ENCODE measurements at regions of chr1 and their contacts with region 1.

Region 1: DNA sequence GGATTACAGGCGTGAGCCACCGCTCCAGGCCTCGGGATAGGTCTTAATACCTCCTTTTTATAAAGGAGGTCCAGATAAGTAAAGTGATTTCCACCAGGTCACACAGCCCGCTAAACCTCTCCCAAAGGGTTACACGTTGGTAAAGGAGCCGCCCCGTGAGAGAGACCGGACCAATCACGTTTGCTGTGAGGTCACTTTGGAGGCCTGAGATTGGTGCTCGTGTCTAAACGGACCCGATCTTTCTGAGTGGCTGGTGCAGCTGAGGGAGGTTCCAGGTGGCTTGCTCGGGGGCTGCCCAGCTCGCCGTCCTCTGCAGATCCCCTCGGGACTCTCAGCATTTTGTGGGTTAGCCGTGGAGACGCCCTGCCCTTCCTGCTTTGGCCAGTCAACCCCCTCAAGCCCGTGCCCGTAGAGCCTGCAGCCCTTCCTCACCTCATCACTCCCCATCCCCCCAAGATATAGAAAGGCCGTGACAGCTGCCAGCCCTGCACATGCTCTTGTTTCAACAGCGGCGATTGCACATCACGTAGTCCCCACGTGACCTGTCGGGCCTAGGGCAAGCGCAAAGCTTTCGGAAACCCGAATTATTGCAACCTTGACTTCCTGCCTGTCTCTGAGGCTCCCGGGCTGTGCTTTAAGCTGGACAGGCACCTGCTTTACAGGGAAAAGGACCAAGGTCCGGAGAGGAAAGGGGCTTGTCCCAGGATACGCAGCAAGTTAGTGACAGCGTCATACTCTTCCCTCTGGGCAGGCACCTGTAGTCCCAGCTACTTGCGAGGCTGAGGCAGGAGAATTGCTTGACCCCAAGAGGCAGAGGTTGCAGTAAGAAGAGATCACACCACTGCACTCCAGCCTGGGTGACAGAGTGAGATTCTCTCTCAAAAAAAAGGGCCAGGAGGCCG is 5.0 kb upstream of the COA7 start:
- DNase-seq: peak; percentile 63 to 92 (median 72)
- ATAC-seq: peak; percentile 91
- H3K4me3 ChIP-seq: peak overlapping the region; percentile 62
- H3K4me3 Mint-ChIP-seq: peak overlapping the region; percentile 84
- H3K27ac ChIP-seq: peak overlapping the region; percentile 56 to 96
- H3K27ac Mint-ChIP-seq: peak overlapping the region; percentile 95
- H3K4me1 ChIP-seq: peaks cover 22% of the 10 kb centered on the region
- H3K4me1 Mint-ChIP-seq: peaks cover 20% of the 10 kb centered on the region
- H3K27me3 ChIP-seq: no peaks in the 10 kb centered on the region
- H3K27me3 Mint-ChIP-seq: no peaks in the 10 kb centered on the region
- CTCF ChIP-seq: no peak

Region 2: DNA sequence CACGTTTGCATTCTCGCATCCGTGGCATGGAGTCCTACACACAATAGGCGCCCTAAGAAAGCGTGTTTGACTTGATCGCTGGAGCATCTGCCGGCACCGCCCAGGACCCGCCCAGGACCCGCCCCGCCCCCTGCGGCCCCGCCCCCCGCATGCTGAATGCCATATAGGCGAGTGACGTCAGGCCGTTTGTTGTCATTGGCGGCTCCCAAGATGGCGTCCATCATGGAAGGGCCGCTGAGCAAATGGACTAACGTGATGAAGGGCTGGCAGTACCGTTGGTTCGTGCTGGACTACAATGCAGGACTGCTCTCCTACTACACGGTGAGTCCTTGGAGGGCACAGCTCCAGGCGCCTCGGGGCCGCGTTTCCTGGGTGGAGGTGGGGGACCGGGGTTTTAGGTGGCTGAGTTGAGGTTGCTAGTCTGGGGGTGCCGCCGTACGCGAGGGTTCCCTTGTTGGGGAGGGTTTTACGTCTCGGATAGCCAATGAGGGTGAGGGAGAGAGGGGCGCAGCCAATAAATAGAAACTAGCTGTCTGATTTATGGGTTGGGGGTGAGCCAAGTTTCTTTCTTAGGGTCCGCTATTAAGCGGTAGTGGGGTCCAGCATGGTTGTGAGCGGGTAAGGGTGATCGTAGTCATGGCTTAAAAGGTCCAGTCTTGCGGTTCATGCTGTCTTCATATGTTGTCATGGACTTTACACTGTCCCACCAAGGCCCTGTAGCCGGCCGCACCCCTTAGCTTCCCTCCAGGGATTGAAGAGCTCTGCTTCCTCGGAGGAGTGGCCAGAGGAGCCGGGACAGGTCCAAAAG is 1086.0 kb before region 1 on chr1 and contains the start of gene OSBPL9:
- CTCF ChIA-PET with region 1: no interaction called
- POLR2A ChIA-PET with region 1: no interaction called
- intact Hi-C with region 1: loop called in 1 of 2 experiments (anchors 5 kb)
- DNase-seq: peak; percentile 80 to 98 (median 85)
- ATAC-seq: peak; percentile 90
- H3K4me3 ChIP-seq: peak within 1 kb of the TSS; percentile 97
- H3K4me3 Mint-ChIP-seq: peak within 1 kb of the TSS; percentile 99
- H3K27ac ChIP-seq: peak within 1 kb of the TSS; percentile 61 to 73
- H3K27ac Mint-ChIP-seq: peak within 1 kb of the TSS; percentile 95
- H3K4me1 ChIP-seq: peaks cover 17% of the 10 kb centered on the region
- H3K4me1 Mint-ChIP-seq: peaks cover 47% of the 10 kb centered on the region
- H3K27me3 ChIP-seq: no peaks in the 10 kb centered on the region
- H3K27me3 Mint-ChIP-seq: no peaks in the 10 kb centered on the region
- CTCF ChIP-seq: no peak
- total RNA-seq, gene OSBPL9: 35.6 to 36.5 TPM

Region 3: GRCh38 chr1:52726265-52727113 is 23.4 kb after region 1 on chr1 and contains the start of gene ZYG11B:
- CTCF ChIA-PET with region 1: interaction called, 4 read pairs
- POLR2A ChIA-PET with region 1: interaction called, 36 read pairs
- intact Hi-C with region 1: loop called (anchors 1 kb)
- DNase-seq: peak; percentile 85 to 96 (median 92)
- ATAC-seq: peak; percentile 91
- H3K4me3 ChIP-seq: peak within 1 kb of the TSS; percentile 79
- H3K4me3 Mint-ChIP-seq: peak within 1 kb of the TSS; percentile 95
- H3K27ac ChIP-seq: peak within 1 kb of the TSS in 1 of 2 donors; percentile 45
- H3K27ac Mint-ChIP-seq: peak within 1 kb of the TSS; percentile 77
- H3K4me1 ChIP-seq: peaks cover 36% of the 10 kb centered on the region
- H3K4me1 Mint-ChIP-seq: peaks cover 54% of the 10 kb centered on the region
- H3K27me3 ChIP-seq: no peaks in the 10 kb centered on the region
- H3K27me3 Mint-ChIP-seq: no peaks in the 10 kb centered on the region
- CTCF ChIP-seq: no peak
- total RNA-seq, gene ZYG11B: 14.1 to 16.1 TPM

Region 4: DNA sequence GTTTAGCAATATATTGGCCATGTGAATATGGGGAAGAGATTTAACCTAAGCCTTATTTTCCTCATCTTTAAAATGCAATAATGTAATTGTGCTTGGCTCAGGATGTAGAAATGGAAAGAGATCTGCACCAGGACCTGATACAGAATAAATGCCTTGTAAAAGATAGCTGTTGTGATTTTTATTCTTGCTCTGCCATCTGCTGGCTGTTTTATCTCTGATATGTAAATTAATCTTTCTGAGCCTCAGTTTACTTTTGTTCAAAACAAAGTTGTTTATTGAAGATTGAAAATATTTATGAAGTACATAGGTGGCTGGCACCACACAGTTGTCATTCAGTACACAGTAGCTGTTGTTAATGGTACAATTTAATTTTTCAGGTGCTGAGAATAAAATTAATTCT is 45.0 kb after region 1 on chr1:
- CTCF ChIA-PET with region 1: interaction called, 4 read pairs
- POLR2A ChIA-PET with region 1: no interaction called
- intact Hi-C with region 1: loop called in 1 of 2 experiments (anchors 5 kb)
- DNase-seq: peak in 3 of 14 experiments; percentile 16 to 19 (median 18)
- ATAC-seq: no peak
- H3K4me3 ChIP-seq: no peak overlapping the region
- H3K4me3 Mint-ChIP-seq: no peak overlapping the region
- H3K27ac ChIP-seq: no peak overlapping the region
- H3K27ac Mint-ChIP-seq: no peak overlapping the region
- H3K4me1 ChIP-seq: no peaks in the 10 kb centered on the region
- H3K4me1 Mint-ChIP-seq: peaks cover 46% of the 10 kb centered on the region
- H3K27me3 ChIP-seq: no peaks in the 10 kb centered on the region
- H3K27me3 Mint-ChIP-seq: no peaks in the 10 kb centered on the region
- CTCF ChIP-seq: no peak

Region 5: GRCh38 chr1:52834798-52835197 is 131.7 kb after region 1 on chr1:
- CTCF ChIA-PET with region 1: no interaction called
- POLR2A ChIA-PET with region 1: no interaction called
- intact Hi-C with region 1: no loop called
- DNase-seq: no peak
- ATAC-seq: no peak
- H3K4me3 ChIP-seq: no peak overlapping the region
- H3K4me3 Mint-ChIP-seq: no peak overlapping the region
- H3K27ac ChIP-seq: no peak overlapping the region
- H3K27ac Mint-ChIP-seq: no peak overlapping the region
- H3K4me1 ChIP-seq: no peaks in the 10 kb centered on the region
- H3K4me1 Mint-ChIP-seq: no peaks in the 10 kb centered on the region
- H3K27me3 ChIP-seq: no peaks in the 10 kb centered on the region
- H3K27me3 Mint-ChIP-seq: peaks cover 8% of the 10 kb centered on the region
- CTCF ChIP-seq: no peak

Region 6: DNA sequence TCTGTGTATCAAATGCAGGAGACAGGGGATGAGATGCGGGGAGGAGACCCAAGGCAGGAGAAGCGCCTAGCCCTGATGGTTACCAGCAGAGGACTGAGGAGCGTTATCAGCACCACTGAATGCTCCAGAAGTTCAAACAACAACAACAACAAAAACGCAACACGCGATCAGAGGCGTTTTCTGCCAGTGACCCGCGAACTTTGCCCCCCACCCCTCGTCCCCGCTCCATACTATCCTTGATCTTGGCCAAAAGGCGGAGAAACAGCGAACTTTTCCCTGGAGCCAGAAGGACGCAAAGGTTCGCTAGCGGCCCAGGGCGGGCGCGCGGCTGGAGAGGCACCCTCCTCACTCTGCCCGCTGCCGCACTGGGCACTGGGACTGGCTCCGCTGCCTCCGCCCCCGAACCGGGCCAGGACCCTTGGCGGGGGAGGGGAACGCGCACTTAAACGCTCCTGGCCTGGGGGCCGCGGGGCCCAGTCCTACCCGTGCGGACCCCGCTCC is 217.7 kb after region 1 on chr1:
- CTCF ChIA-PET with region 1: no interaction called
- POLR2A ChIA-PET with region 1: interaction called, 7 read pairs
- intact Hi-C with region 1: loop called in 1 of 2 experiments (anchors 2 kb)
- DNase-seq: peak in 1 of 14 experiments; percentile 30
- ATAC-seq: no peak
- H3K4me3 ChIP-seq: peak overlapping the region; percentile 66
- H3K4me3 Mint-ChIP-seq: peak overlapping the region; percentile 85
- H3K27ac ChIP-seq: peak overlapping the region; percentile 53 to 79
- H3K27ac Mint-ChIP-seq: peak overlapping the region; percentile 70
- H3K4me1 ChIP-seq: peaks cover 28% of the 10 kb centered on the region
- H3K4me1 Mint-ChIP-seq: peaks cover 39% of the 10 kb centered on the region
- H3K27me3 ChIP-seq: no peaks in the 10 kb centered on the region
- H3K27me3 Mint-ChIP-seq: no peaks in the 10 kb centered on the region
- CTCF ChIP-seq: no peak

Region 7: GRCh38 chr1:52976183-52977035 is 273.3 kb after region 1 on chr1:
- CTCF ChIA-PET with region 1: no interaction called
- POLR2A ChIA-PET with region 1: no interaction called
- intact Hi-C with region 1: no loop called
- DNase-seq: no peak
- ATAC-seq: no peak
- H3K4me3 ChIP-seq: no peak overlapping the region
- H3K4me3 Mint-ChIP-seq: no peak overlapping the region
- H3K27ac ChIP-seq: no peak overlapping the region
- H3K27ac Mint-ChIP-seq: no peak overlapping the region
- H3K4me1 ChIP-seq: no peaks in the 10 kb centered on the region
- H3K4me1 Mint-ChIP-seq: no peaks in the 10 kb centered on the region
- H3K27me3 ChIP-seq: no peaks in the 10 kb centered on the region
- H3K27me3 Mint-ChIP-seq: no peaks in the 10 kb centered on the region
- CTCF ChIP-seq: no peak

Region 8: GRCh38 chr1:53025034-53025768 is 322.1 kb after region 1 on chr1:
- CTCF ChIA-PET with region 1: no interaction called
- POLR2A ChIA-PET with region 1: no interaction called
- intact Hi-C with region 1: no loop called
- DNase-seq: no peak
- ATAC-seq: no peak
- H3K4me3 ChIP-seq: no peak overlapping the region
- H3K4me3 Mint-ChIP-seq: no peak overlapping the region
- H3K27ac ChIP-seq: no peak overlapping the region
- H3K27ac Mint-ChIP-seq: no peak overlapping the region
- H3K4me1 ChIP-seq: no peaks in the 10 kb centered on the region
- H3K4me1 Mint-ChIP-seq: no peaks in the 10 kb centered on the region
- H3K27me3 ChIP-seq: no peaks in the 10 kb centered on the region
- H3K27me3 Mint-ChIP-seq: no peaks in the 10 kb centered on the region
- CTCF ChIP-seq: no peak

Region 9: GRCh38 chr1:53182111-53182593 is 479.0 kb after region 1 on chr1:
- CTCF ChIA-PET with region 1: no interaction called
- POLR2A ChIA-PET with region 1: interaction called, 3 read pairs
- intact Hi-C with region 1: loop called in 1 of 2 experiments (anchors 2 kb)
- DNase-seq: peak; percentile 69 to 88 (median 78)
- ATAC-seq: peak; percentile 81
- H3K4me3 ChIP-seq: no peak overlapping the region
- H3K4me3 Mint-ChIP-seq: no peak overlapping the region
- H3K27ac ChIP-seq: no peak overlapping the region
- H3K27ac Mint-ChIP-seq: no peak overlapping the region
- H3K4me1 ChIP-seq: peaks cover 4% of the 10 kb centered on the region
- H3K4me1 Mint-ChIP-seq: no peaks in the 10 kb centered on the region
- H3K27me3 ChIP-seq: peaks cover 0 to 2% of the 10 kb centered on the region in 2 experiments
- H3K27me3 Mint-ChIP-seq: peaks cover 6% of the 10 kb centered on the region
- CTCF ChIP-seq: peak; percentile 91

Measured in CD4-positive, alpha-beta T cell (primary cell).